MCF 10A (cell line): ENCODE measurements at regions of chrX and their contacts with region 1.

Region 1: DNA sequence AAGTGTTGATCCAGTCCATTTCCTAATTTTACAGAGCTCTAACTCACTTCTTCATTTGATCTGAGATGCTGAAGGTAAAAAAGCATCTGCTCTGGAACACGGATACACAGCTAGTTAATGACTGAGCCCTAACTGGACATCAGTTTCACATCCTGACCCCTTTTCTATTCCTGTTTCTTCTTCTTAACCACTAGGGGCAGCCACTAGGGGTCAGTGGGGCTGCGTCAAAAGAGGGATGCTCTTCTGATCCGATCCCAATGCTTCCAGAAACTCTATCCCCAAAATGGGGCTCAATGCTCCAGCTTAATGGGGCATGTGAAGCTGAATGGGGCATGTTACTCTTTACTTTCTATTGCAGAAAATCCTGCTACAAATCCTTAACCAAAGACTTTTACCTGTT is 33.4 kb upstream of the PHKA2 start:
- DNase-seq: peak; percentile 49
- H3K4me3 Mint-ChIP-seq: no peak overlapping the region
- H3K27ac Mint-ChIP-seq: no peak overlapping the region
- H3K4me1 Mint-ChIP-seq: no peaks in the 10 kb centered on the region
- H3K27me3 Mint-ChIP-seq: no peaks in the 10 kb centered on the region
- CTCF ChIP-seq: peak; percentile 4

Region 2: DNA sequence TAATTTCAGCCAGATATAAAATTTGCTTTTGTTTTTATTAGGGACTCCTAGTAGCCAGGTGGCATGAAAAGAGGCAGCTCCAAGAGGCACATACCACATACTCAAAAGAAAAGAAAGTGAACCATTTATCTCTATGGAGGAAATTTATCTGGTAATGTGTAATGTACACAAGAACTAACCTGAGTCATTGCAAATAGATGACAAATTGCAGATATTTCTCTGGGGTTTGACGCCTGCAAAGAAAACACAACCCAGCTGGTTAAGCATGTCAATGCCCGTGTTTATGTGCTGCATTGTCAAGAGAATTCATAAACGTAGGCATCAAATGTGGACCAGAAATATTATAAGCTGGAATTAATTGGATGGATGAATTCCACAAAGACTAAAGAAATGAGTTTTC is 13.5 kb after region 1 on chrX:
- CTCF ChIA-PET with region 1: interaction called, 30 read pairs
- POLR2A ChIA-PET with region 1: interaction called, 3 read pairs
- intact Hi-C with region 1: no loop called
- DNase-seq: no peak
- H3K4me3 Mint-ChIP-seq: no peak overlapping the region
- H3K27ac Mint-ChIP-seq: no peak overlapping the region
- H3K4me1 Mint-ChIP-seq: no peaks in the 10 kb centered on the region
- H3K27me3 Mint-ChIP-seq: no peaks in the 10 kb centered on the region
- CTCF ChIP-seq: no peak